CD14-positive monocyte (primary cell): ENCODE measurements at regions of chr10 and their contacts with region 1.

Region 1: GRCh38 chr10:70363971-70364771 is 18.3 kb downstream of the LRRC20 start:
- DNase-seq: peak; percentile 89 to 95 (median 94)
- H3K4me3 ChIP-seq: peak overlapping the region in 1 of 3 experiments; percentile 2
- H3K4me3 Mint-ChIP-seq: peak overlapping the region in 1 of 2 donors; percentile 59
- H3K27ac ChIP-seq: peak overlapping the region; percentile 27 to 46
- H3K27ac Mint-ChIP-seq: peak overlapping the region; percentile 35 to 88 (median 87)
- H3K4me1 ChIP-seq: peaks cover 29 to 38% of the 10 kb centered on the region in 2 donors
- H3K4me1 Mint-ChIP-seq: peaks cover 36% of the 10 kb centered on the region
- H3K27me3 ChIP-seq: no peaks in the 10 kb centered on the region
- H3K27me3 Mint-ChIP-seq: peaks cover 0 to 2% (median 2%) of the 10 kb centered on the region in 3 donors
- CTCF ChIP-seq: peak; percentile 93

Region 2: GRCh38 chr10:70221030-70221429 is 143.1 kb before region 1 on chr10:
- intact Hi-C with region 1: loop called (anchors 1 to 5 kb)
- DNase-seq: no peak
- H3K4me3 ChIP-seq: peak overlapping the region in 1 of 3 experiments; percentile 36
- H3K4me3 Mint-ChIP-seq: no peak overlapping the region
- H3K27ac ChIP-seq: no peak overlapping the region
- H3K27ac Mint-ChIP-seq: peak overlapping the region in 3 of 7 donors; percentile 51 to 71 (median 66)
- H3K4me1 ChIP-seq: peaks cover 3 to 10% of the 10 kb centered on the region in 2 donors
- H3K4me1 Mint-ChIP-seq: peaks cover 10% of the 10 kb centered on the region
- H3K27me3 ChIP-seq: no peaks in the 10 kb centered on the region
- H3K27me3 Mint-ChIP-seq: peaks cover 0 to 1% (median 0%) of the 10 kb centered on the region in 3 donors
- CTCF ChIP-seq: no peak

Region 3: GRCh38 chr10:70528726-70529362 is 164.7 kb after region 1 on chr10:
- intact Hi-C with region 1: no loop called
- DNase-seq: peak in 2 of 3 donors; percentile 11 to 25
- H3K4me3 ChIP-seq: no peak overlapping the region
- H3K4me3 Mint-ChIP-seq: no peak overlapping the region
- H3K27ac ChIP-seq: no peak overlapping the region
- H3K27ac Mint-ChIP-seq: peak overlapping the region in 1 of 7 donors; percentile 10
- H3K4me1 ChIP-seq: no peaks in the 10 kb centered on the region
- H3K4me1 Mint-ChIP-seq: no peaks in the 10 kb centered on the region
- H3K27me3 ChIP-seq: no peaks in the 10 kb centered on the region
- H3K27me3 Mint-ChIP-seq: peaks cover 0 to 4% (median 2%) of the 10 kb centered on the region in 3 donors
- CTCF ChIP-seq: no peak